ENCODE measurements at regions of chr7 and their contacts with region 1.

Region 1: GRCh38 chr7:151110941-151111645 is 24.8 kb downstream of the AGAP3 start:
- DNase-seq: peak; percentile 60 to 97 (median 84)

Region 2: DNA sequence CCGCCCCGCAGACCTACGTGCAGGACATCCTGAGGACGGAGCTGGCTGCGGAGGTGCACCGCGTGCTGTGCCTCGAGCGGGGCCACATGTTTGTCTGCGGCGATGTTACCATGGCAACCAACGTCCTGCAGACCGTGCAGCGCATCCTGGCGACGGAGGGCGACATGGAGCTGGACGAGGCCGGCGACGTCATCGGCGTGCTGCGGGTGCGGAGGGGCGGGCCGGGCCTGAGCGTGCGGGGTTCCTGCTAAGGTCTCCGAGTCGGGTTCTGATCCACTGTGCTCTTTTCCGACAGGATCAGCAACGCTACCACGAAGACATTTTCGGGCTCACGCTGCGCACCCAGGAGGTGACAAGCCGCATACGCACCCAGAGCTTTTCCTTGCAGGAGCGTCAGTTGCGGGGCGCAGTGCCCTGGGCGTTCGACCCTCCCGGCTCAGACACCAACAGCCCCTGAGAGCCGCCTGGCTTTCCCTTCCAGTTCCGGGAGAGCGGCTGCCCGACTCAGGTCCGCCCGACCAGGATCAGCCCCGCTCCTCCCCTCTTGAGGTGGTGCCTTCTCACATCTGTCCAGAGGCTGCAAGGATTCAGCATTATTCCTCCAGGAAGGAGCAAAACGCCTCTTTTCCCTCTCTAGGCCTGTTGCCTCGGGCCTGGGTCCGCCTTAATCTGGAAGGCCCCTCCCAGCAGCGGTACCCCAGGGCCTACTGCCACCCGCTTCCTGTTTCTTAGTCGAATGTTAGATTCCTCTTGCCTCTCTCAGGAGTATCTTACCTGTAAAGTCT is 97.2 kb before region 1 on chr7:
- intact Hi-C with region 1: loop called (anchors 1 kb)
- DNase-seq: peak; percentile 63 to 99 (median 86)

Region 3: DNA sequence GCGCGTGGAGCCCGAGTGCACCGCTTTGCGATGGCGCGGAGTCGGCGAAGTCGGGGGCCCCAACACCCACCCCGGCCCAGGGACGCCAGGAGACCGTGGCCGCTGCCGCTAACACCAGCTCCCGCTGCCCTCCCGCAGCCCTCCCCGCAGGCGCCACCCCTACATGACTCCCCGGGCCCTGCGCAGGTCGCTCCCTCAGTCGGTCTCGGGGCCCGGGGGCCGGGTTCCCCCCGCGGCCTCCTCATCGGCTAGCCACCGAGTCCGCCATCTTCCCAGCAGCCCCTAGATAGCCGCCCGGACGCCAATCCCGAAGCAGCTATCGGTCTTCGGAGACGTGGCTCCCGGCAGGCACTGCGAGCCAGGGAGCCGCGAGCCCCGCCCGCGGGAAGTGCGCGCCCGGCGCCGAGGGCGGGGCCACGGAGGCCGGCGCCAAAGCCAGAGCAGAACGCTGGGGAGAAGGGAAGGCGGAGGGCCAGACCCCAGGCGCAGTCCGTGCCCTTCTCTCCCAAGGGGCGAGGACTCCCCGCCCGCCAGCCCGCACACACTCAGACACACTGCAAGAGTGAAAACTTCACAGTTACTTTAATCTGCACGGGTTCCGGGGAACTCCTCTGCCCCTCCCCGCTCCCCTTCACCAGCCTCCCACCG is 30.4 kb before region 1 on chr7 and contains the start of gene FASTK:
- intact Hi-C with region 1: loop called (anchors 5 kb)
- DNase-seq: peak; percentile 90 to 99 (median 94)

Measured in posterior cingulate gyrus (tissue), 11 donors.